Activated T-helper 1 cell treated with anti-CD3 and anti-CD28 coated beads, Interleukin-12 subunit alpha, Interleukin-12 subunit beta, Interleukin-2, Interleukin-4 antibody, amounts not matched to agents 30 ng/mL and 10 ng/mL and 1 ng/mL, durations not matched to agents 14 hours and 24 hours and 36 hours (primary cell): ENCODE measurements at regions of chr3 and their contacts with region 1.

Region 1: GRCh38 chr3:56303487-56303886 is 164.8 kb downstream of the ERC2 start:
- DNase-seq: no peak
- H3K4me3 Mint-ChIP-seq: no peak overlapping the region
- H3K27ac Mint-ChIP-seq: no peak overlapping the region
- H3K4me1 Mint-ChIP-seq: no peaks in the 10 kb centered on the region
- H3K27me3 Mint-ChIP-seq: peaks cover 6% of the 10 kb centered on the region

Region 2: DNA sequence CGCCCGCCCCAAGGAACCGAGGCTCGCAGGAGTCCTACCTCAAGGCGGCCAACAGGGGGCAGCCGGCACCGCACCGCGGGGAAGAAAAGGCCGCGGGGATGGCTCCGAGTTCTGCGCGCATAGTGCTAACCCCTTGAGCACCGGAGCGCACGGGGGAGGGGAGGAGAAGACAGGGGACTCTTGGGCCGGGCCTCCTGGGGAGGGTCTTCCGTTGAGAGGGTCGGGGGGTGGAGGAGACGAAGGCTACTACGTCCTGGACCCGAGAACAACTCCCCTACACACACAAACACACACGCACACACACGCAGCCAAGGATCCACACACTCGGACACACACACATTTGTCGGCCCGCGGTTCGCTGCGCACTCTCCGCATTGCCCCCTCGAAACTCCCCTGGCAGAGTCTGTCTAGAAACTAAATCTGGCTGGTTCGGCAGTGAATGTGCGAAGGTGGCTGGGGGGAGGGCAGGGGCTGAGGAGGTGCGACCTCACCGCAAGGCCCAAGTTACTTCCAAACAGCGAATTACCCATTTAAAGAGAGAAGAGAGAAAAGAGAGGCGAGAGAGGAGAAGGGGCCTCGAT is 818.2 kb before region 1 on chr3:
- intact Hi-C with region 1: loop called (anchors 2 kb)
- DNase-seq: peak; percentile 12
- H3K4me3 Mint-ChIP-seq: no peak overlapping the region
- H3K27ac Mint-ChIP-seq: no peak overlapping the region
- H3K4me1 Mint-ChIP-seq: peaks cover 5% of the 10 kb centered on the region
- H3K27me3 Mint-ChIP-seq: peaks cover 80% of the 10 kb centered on the region

Region 3: GRCh38 chr3:56291244-56291680 is 12.2 kb before region 1 on chr3:
- intact Hi-C with region 1: loop called (anchors 1 kb)
- DNase-seq: peak; percentile 14
- H3K4me3 Mint-ChIP-seq: peak overlapping the region; percentile 40
- H3K27ac Mint-ChIP-seq: peak overlapping the region; percentile 59
- H3K4me1 Mint-ChIP-seq: peaks cover 31% of the 10 kb centered on the region
- H3K27me3 Mint-ChIP-seq: peaks cover 5% of the 10 kb centered on the region

Region 4: GRCh38 chr3:56459104-56459496 is 155.6 kb after region 1 on chr3:
- intact Hi-C with region 1: no loop called
- DNase-seq: no peak
- H3K4me3 Mint-ChIP-seq: no peak overlapping the region
- H3K27ac Mint-ChIP-seq: no peak overlapping the region
- H3K4me1 Mint-ChIP-seq: no peaks in the 10 kb centered on the region
- H3K27me3 Mint-ChIP-seq: peaks cover 3% of the 10 kb centered on the region